Head of caudate nucleus (tissue), 42 donors: ENCODE measurements at regions of chr1 and their contacts with region 1.

Region 1: GRCh38 chr1:176073524-176074157 is 133.4 kb downstream of the COP1 start:
- DNase-seq: peak in 25 of 42 donors; percentile 7 to 85 (median 52)

Region 2: GRCh38 chr1:175154629-175155472 is 918.8 kb before region 1 on chr1:
- intact Hi-C with region 1: loop called (anchors 10 kb)
- DNase-seq: peak; percentile 19 to 87 (median 72)

Region 3: DNA sequence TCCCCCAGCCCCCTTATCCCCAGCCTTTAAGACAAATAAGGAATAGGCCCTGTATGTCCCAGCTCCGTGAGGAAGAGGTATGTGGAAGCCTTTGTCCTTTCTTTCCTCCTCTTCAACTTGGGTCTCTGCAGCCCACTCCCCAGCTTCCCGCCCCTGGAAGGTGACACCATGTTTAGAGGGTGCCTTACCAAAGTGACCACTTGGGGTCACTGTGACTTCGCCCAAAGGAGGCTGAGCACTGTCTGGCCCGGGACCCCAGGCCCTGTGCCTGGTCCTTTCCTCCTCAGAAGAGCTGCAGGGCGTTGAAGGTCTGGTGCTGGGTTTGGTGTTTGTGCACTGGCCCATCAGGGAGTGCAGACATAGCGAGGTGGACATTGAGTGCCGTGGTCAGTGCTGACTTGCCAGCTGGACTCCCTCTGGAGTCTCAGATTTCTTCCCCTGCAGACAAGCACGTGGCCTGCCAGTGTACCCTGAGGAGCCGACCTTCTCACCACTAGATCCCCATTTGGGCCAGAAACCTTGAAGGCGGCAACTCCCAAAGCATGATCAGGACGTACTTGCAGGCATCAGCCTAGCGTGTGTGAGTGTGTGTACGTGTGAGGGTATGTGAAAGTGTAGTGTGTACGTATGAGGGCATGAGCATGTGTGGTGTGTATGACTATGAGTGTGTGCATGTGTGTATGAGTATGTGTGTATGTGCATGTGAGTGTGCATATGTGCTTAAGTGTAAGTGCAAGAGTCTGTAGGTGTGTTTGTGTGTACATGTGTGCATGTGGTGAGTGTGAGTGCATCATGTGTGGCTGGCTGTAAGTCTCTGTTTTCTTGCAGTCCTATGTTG is 699.6 kb before region 1 on chr1:
- intact Hi-C with region 1: loop called (anchors 10 kb)
- DNase-seq: peak in 39 of 42 donors; percentile 11 to 80 (median 44)

Region 4: GRCh38 chr1:175951627-175952026 is 122.0 kb before region 1 on chr1:
- intact Hi-C with region 1: no loop called
- DNase-seq: no peak